CD14-positive monocyte (primary cell): ENCODE measurements at regions of chr7 and their contacts with region 1.

Region 1: GRCh38 chr7:105210721-105211205 is 178.0 kb downstream of the SRPK2 start:
- DNase-seq: peak in 2 of 3 donors; percentile 10 to 44
- H3K4me3 ChIP-seq: peak overlapping the region in 1 of 3 experiments; percentile 21
- H3K4me3 Mint-ChIP-seq: peak overlapping the region in 1 of 2 donors; percentile 27
- H3K27ac ChIP-seq: peak overlapping the region; percentile 39 to 79
- H3K27ac Mint-ChIP-seq: peak overlapping the region; percentile 82 to 92 (median 89)
- H3K4me1 ChIP-seq: peaks cover 40 to 54% of the 10 kb centered on the region in 2 donors
- H3K4me1 Mint-ChIP-seq: peaks cover 56% of the 10 kb centered on the region
- H3K27me3 ChIP-seq: no peaks in the 10 kb centered on the region
- H3K27me3 Mint-ChIP-seq: peaks cover 0 to 2% (median 0%) of the 10 kb centered on the region in 3 donors
- CTCF ChIP-seq: no peak

Region 2: GRCh38 chr7:105268511-105269392 is 58.0 kb after region 1 on chr7:
- intact Hi-C with region 1: loop called in 1 of 2 experiments (anchors 10 kb)
- DNase-seq: peak; percentile 37 to 62 (median 45)
- H3K4me3 ChIP-seq: peak overlapping the region; percentile 37 to 75 (median 54)
- H3K4me3 Mint-ChIP-seq: peak overlapping the region; percentile 66 to 91
- H3K27ac ChIP-seq: peak overlapping the region; percentile 32 to 82
- H3K27ac Mint-ChIP-seq: peak overlapping the region; percentile 82 to 96 (median 91)
- H3K4me1 ChIP-seq: peaks cover 13 to 25% of the 10 kb centered on the region in 2 donors
- H3K4me1 Mint-ChIP-seq: peaks cover 16% of the 10 kb centered on the region
- H3K27me3 ChIP-seq: no peaks in the 10 kb centered on the region
- H3K27me3 Mint-ChIP-seq: no peaks in the 10 kb centered on the region
- CTCF ChIP-seq: no peak

Region 3: GRCh38 chr7:105278973-105279687 is 68.4 kb after region 1 on chr7:
- intact Hi-C with region 1: no loop called
- DNase-seq: no peak
- H3K4me3 ChIP-seq: no peak overlapping the region
- H3K4me3 Mint-ChIP-seq: no peak overlapping the region
- H3K27ac ChIP-seq: no peak overlapping the region
- H3K27ac Mint-ChIP-seq: no peak overlapping the region
- H3K4me1 ChIP-seq: no peaks in the 10 kb centered on the region
- H3K4me1 Mint-ChIP-seq: peaks cover 18% of the 10 kb centered on the region
- H3K27me3 ChIP-seq: no peaks in the 10 kb centered on the region
- H3K27me3 Mint-ChIP-seq: peaks cover 0 to 2% (median 0%) of the 10 kb centered on the region in 3 donors
- CTCF ChIP-seq: no peak